ENCODE measurements at regions of chr2 and their contacts with region 1.

Region 1: GRCh38 chr2:55168221-55169154 is 63.6 kb downstream of the CLHC1 start:
- DNase-seq: no peak
- H3K4me3 ChIP-seq: no peak overlapping the region
- H3K27ac ChIP-seq: no peak overlapping the region
- H3K4me1 ChIP-seq: peaks cover 0 to 15% (median 4%) of the 10 kb centered on the region in 4 experiments; a peak in 3 of 7 replicates
- H3K27me3 ChIP-seq: no peaks in the 10 kb centered on the region
- CTCF ChIP-seq: peak in 2 of 3 experiments; percentile 65 to 77; a peak in 3 of 4 replicates
- EP300 ChIP-seq: no peak
- POLR2A ChIP-seq: no peak
- RAD21 ChIP-seq: peak; percentile 90 to 91

Region 2: GRCh38 chr2:54899576-54900200 is 268.8 kb before region 1 on chr2:
- CTCF ChIA-PET with region 1: interaction called, 31 read pairs
- POLR2A ChIA-PET with region 1: no interaction called
- DNase-seq: no peak
- H3K4me3 ChIP-seq: no peak overlapping the region
- H3K27ac ChIP-seq: no peak overlapping the region
- H3K4me1 ChIP-seq: no peaks in the 10 kb centered on the region
- H3K27me3 ChIP-seq: no peaks in the 10 kb centered on the region
- CTCF ChIP-seq: peak in 2 of 3 experiments; percentile 34; a peak in 2 of 4 replicates
- EP300 ChIP-seq: no peak
- POLR2A ChIP-seq: no peak
- RAD21 ChIP-seq: peak; percentile 66 to 74

Region 3: GRCh38 chr2:55050133-55050994 is 118.1 kb before region 1 on chr2 and contains the start of gene RTN4:
- CTCF ChIA-PET with region 1: interaction called, 12 read pairs
- POLR2A ChIA-PET with region 1: interaction called, 10 read pairs
- DNase-seq: peak; percentile 97 to 99
- H3K4me3 ChIP-seq: peak within 1 kb of the TSS; percentile 82 to 100 (median 94)
- H3K27ac ChIP-seq: peak within 1 kb of the TSS; percentile 98
- H3K4me1 ChIP-seq: peaks cover 0 to 10% (median 5%) of the 10 kb centered on the region in 4 experiments; a peak in 3 of 7 replicates
- H3K27me3 ChIP-seq: no peaks in the 10 kb centered on the region
- CTCF ChIP-seq: no peak
- EP300 ChIP-seq: peak in 1 of 2 experiments; percentile 57; a peak in 1 of 3 replicates
- POLR2A ChIP-seq: peak; percentile 95 to 97
- RAD21 ChIP-seq: no peak
- total RNA-seq, gene RTN4: 240 and 242 TPM in 2 replicates

Region 4: DNA sequence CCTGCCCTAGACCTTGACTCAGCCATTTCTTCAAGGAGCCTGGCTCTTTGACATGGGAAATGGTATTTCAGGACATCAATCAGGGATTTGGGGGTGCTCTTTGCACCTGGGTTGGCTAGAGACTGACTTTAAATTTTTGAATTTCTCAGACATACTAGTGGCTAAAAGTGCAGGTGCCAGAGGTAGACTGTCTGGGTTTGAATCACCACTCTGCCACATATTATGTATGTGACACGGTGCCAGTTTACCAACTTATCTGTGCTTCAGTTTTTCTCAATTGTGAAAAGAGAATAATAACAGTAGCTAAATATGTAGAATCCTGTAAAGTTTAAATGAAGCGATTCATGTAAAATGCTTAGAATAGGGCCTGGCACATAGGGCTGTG is 69.0 kb before region 1 on chr2:
- CTCF ChIA-PET with region 1: no interaction called
- POLR2A ChIA-PET with region 1: no interaction called
- DNase-seq: no peak
- H3K4me3 ChIP-seq: no peak overlapping the region
- H3K27ac ChIP-seq: no peak overlapping the region
- H3K4me1 ChIP-seq: peaks cover 0 to 4% (median 0%) of the 10 kb centered on the region in 4 experiments; a peak in 2 of 7 replicates
- H3K27me3 ChIP-seq: no peaks in the 10 kb centered on the region
- CTCF ChIP-seq: no peak
- EP300 ChIP-seq: no peak
- POLR2A ChIP-seq: no peak
- RAD21 ChIP-seq: no peak

Region 5: DNA sequence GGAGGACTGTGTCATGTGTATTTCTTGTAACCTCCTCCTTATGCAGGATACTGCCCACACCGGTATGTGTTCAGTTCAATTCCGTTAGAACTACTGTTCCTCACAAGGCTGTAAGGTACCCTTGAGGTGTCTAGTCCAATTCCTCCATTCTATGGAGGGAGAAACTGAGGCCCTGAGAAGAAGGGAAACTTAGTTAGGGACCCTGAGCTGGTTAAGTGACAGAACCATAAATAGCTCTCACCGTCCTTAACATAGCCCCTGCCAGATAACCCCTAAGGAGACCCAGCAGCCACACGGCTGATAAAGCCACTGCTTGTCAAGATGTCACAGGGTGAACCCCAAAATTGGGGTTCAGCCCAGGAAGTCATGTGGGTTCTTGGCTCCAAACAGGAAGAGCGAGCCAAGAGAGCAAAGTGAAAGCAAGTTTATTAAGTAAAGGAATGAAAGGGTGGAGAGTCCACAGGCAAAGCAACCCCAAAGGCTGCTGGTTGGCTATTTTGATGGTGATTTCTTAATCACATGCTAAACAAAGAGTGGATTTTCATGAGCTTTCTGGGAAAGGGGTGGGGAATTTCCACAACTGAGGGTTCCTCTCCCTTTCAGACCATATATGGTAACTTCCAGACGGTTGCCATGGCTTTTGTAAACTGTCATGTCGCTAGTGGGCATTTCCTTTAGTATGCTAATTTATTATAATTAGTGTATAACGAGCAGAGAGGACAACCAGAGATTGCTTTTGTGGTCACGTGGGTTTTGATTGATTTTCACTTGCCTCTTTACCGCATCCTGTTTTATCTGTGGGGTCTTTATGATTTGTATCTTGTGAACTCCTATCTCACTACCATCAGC is 34.8 kb before region 1 on chr2:
- CTCF ChIA-PET with region 1: interaction called, 18 read pairs
- POLR2A ChIA-PET with region 1: interaction called, 6 read pairs
- DNase-seq: peak in 1 of 2 experiments; percentile 78
- H3K4me3 ChIP-seq: peak overlapping the region in 3 of 4 experiments; percentile 2 to 40 (median 36); a peak in 3 of 8 replicates
- H3K27ac ChIP-seq: peak overlapping the region; percentile 97
- H3K4me1 ChIP-seq: peaks cover 12 to 27% (median 24%) of the 10 kb centered on the region in 4 experiments
- H3K27me3 ChIP-seq: no peaks in the 10 kb centered on the region
- CTCF ChIP-seq: no peak
- EP300 ChIP-seq: peak in 1 of 2 experiments; percentile 95; a peak in 1 of 3 replicates
- POLR2A ChIP-seq: peak; percentile 41 to 81
- RAD21 ChIP-seq: 0 out of 4 replicates have a peak, but pooled peaks of 1 of the 2 experiments have one; percentile 3

Region 6: GRCh38 chr2:55196506-55196905 is 28.0 kb after region 1 on chr2:
- CTCF ChIA-PET with region 1: no interaction called
- POLR2A ChIA-PET with region 1: no interaction called
- DNase-seq: no peak
- H3K4me3 ChIP-seq: no peak overlapping the region
- H3K27ac ChIP-seq: no peak overlapping the region
- H3K4me1 ChIP-seq: no peaks in the 10 kb centered on the region
- H3K27me3 ChIP-seq: no peaks in the 10 kb centered on the region
- CTCF ChIP-seq: no peak
- EP300 ChIP-seq: no peak
- POLR2A ChIP-seq: no peak
- RAD21 ChIP-seq: no peak

Region 7: DNA sequence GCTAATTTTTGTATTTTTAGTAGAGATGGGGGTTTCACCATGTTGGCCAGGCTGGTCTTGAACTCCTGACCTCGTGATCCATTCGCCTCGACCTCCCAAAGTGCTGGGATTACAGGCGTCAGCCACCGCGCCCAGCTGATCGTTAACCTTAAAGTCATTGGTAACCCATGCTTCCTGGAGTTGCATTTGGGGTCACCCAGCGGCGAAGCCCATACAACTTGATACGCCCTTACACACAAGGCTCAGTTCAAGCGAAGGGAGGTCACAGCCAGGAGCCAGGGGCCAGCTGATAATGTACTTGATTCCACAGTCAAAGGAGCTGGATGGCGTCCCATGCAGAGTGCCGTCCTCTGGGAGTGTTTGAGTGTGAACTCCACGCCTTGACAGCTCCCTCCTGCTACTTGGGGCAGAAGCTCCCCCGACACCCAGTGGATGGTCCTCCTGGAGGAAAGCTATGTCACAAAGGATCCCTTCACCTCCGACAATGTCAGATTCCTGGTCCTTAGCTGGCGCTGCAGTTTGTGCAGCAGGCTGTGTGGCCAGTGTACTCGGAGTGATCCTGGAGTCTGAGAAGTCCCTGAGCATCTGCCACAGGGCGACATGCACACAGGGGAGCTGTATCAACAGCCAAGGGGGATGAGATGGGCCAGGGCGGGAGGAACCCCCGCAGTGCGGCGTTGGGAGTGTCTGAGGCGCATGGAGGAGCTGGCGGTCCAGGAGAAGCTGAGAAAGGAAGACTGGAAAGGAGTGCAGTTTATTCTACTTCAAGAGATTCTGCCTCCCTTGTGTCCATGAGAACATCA is 55.7 kb after region 1 on chr2:
- CTCF ChIA-PET with region 1: interaction called, 10 read pairs
- POLR2A ChIA-PET with region 1: no interaction called
- DNase-seq: no peak
- H3K4me3 ChIP-seq: peak overlapping the region in 2 of 4 experiments; percentile 89; a peak in 5 of 8 replicates
- H3K27ac ChIP-seq: no peak overlapping the region
- H3K4me1 ChIP-seq: peaks cover 0 to 4% (median 3%) of the 10 kb centered on the region in 4 experiments; a peak in 4 of 7 replicates
- H3K27me3 ChIP-seq: no peaks in the 10 kb centered on the region
- CTCF ChIP-seq: no peak
- EP300 ChIP-seq: no peak
- POLR2A ChIP-seq: no peak
- RAD21 ChIP-seq: no peak